RWPE1 (cell line): ENCODE measurements at regions of chr2 and their contacts with region 1.

Region 1: DNA sequence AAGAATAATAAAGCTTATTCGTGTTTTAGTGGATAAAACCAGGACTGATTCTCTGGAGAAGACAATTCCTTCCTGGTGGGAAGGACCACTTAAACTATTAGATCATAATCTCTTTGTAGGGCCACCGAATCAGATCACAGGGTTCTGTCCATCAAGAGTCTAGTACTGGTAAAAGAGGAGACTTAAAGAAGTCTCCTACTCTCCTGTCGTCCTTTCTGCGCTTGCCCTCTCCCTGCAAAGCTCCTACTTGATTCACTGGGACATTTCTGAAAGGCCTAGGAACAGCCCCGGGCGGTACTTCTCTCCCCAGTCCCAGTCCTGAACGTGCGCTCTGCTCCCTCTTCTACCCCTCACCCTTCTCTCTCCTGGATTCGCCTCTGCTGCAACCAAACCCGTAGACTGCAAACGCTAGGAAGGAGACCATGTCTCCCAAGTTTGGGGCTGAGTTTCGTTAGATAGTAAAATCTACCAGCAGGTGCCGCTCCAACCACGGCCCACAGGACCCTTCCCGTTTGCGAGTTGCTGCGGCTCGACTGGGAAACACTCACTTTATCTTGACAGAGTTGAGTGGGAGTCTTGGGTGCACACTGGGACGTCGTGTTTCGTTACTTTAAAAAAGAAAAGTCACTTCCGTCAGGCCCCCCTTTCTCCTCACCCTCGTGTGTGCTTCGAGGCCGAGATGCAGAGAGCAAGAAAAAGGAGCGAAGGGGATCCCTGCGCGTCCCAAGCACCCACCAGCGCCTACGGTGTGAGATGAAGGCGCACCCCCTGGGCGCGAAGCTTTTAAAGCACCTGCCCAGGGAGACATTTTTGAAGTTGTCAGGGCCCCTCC is 923 bp downstream of the FIGLA start:
- DNase-seq: peak; percentile 61
- H3K27ac ChIP-seq: no peak overlapping the region
- CTCF ChIP-seq: peak; percentile 60

Region 2: DNA sequence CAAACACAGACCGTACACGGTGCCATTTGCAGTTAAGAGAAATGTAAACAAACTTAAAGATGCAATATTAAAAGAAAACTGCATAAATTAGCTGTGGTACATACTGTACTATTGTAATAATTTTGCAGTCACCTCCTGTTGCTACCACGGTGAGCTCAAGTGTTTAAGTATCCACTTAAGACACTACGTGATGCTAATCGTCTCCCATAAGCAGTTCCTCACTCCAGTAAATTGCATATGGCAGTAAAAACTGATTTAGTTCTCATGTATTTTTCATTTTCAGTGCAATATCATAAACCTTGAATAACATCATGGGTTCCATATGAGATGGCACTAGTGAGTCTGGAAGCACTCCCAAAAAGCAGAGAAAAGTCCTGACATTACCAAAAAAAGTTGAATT is 16.5 kb after region 1 on chr2:
- CTCF ChIA-PET with region 1: no interaction called
- POLR2A ChIA-PET with region 1: no interaction called
- DNase-seq: no peak
- H3K27ac ChIP-seq: no peak overlapping the region
- CTCF ChIP-seq: no peak

Region 3: GRCh38 chr2:70828914-70829824 is 39.6 kb after region 1 on chr2:
- CTCF ChIA-PET with region 1: interaction called, 12 read pairs
- POLR2A ChIA-PET with region 1: no interaction called
- DNase-seq: no peak
- H3K27ac ChIP-seq: no peak overlapping the region
- CTCF ChIP-seq: no peak